Common myeloid progenitor, CD34-positive (primary cell): ENCODE measurements at regions of chr11 and their contacts with region 1.

Region 1: GRCh38 chr11:118610804-118611795 is 3.7 kb downstream of the PHLDB1 start:
- DNase-seq: peak; percentile 54 to 71 (median 70)
- H3K4me3 ChIP-seq: peak overlapping the region; percentile 4 to 64 (median 47)
- H3K27ac ChIP-seq: no peak overlapping the region
- H3K4me1 ChIP-seq: peaks cover 0 to 46% (median 38%) of the 10 kb centered on the region in 4 experiments
- H3K27me3 ChIP-seq: peaks cover 0 to 44% (median 13%) of the 10 kb centered on the region in 5 experiments

Region 2: DNA sequence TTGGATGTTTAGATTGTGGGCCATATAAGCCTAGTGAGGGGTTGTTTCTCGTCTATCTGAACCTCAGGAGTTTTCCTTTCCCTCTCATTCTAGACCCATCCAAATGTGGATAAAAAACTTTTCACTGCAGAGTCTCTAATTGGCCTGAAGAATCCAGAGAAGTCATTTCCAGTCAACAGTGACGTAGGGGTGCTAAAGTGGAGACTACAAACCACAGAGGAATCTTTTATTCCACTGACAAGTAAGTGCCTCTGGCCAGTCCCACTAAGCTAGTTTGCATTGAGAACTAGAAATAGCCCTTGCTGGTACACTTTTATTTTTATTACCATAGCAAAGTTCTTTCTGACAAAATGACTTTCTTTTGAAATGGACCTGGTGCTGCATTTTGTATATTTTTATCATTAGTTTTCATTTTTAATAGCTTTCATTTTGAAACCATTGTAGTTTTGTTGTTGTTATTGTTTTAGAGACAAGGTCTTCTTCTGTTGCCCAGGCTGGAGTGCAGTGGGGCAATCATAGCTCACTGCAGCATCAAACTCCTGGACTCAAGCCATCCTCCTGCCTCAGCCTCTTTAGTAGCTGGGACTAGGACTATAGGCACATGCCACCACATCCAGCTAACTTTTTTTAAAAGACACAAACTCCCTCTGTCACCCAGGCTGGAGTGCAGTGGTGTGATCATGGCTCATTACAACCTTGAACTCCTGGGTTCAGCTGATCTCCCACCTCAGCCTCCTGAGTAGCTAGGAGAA is 18.3 kb before region 1 on chr11:
- CTCF ChIA-PET with region 1: interaction called, 133 read pairs
- POLR2A ChIA-PET with region 1: interaction called, 3 read pairs
- DNase-seq: no peak
- H3K4me3 ChIP-seq: no peak overlapping the region
- H3K27ac ChIP-seq: no peak overlapping the region
- H3K4me1 ChIP-seq: peaks cover 0 to 9% (median 6%) of the 10 kb centered on the region in 4 experiments
- H3K27me3 ChIP-seq: no peaks in the 10 kb centered on the region

Region 3: GRCh38 chr11:118621071-118621783 is 10.1 kb after region 1 on chr11:
- CTCF ChIA-PET with region 1: interaction called, 31 read pairs
- POLR2A ChIA-PET with region 1: interaction called, 3 read pairs
- DNase-seq: peak in 2 of 3 donors; percentile 44 to 55
- H3K4me3 ChIP-seq: peak overlapping the region; percentile 22 to 74 (median 43)
- H3K27ac ChIP-seq: no peak overlapping the region
- H3K4me1 ChIP-seq: peaks cover 0 to 26% (median 20%) of the 10 kb centered on the region in 4 experiments
- H3K27me3 ChIP-seq: no peaks in the 10 kb centered on the region

Region 4: GRCh38 chr11:118634431-118635236 is 23.5 kb after region 1 on chr11:
- CTCF ChIA-PET with region 1: interaction called, 12 read pairs
- POLR2A ChIA-PET with region 1: no interaction called
- DNase-seq: peak in 2 of 3 donors; percentile 22 to 34
- H3K4me3 ChIP-seq: peak overlapping the region in 1 of 7 experiments; percentile 58
- H3K27ac ChIP-seq: no peak overlapping the region
- H3K4me1 ChIP-seq: peaks cover 0 to 6% (median 0%) of the 10 kb centered on the region in 4 experiments
- H3K27me3 ChIP-seq: no peaks in the 10 kb centered on the region

Region 5: DNA sequence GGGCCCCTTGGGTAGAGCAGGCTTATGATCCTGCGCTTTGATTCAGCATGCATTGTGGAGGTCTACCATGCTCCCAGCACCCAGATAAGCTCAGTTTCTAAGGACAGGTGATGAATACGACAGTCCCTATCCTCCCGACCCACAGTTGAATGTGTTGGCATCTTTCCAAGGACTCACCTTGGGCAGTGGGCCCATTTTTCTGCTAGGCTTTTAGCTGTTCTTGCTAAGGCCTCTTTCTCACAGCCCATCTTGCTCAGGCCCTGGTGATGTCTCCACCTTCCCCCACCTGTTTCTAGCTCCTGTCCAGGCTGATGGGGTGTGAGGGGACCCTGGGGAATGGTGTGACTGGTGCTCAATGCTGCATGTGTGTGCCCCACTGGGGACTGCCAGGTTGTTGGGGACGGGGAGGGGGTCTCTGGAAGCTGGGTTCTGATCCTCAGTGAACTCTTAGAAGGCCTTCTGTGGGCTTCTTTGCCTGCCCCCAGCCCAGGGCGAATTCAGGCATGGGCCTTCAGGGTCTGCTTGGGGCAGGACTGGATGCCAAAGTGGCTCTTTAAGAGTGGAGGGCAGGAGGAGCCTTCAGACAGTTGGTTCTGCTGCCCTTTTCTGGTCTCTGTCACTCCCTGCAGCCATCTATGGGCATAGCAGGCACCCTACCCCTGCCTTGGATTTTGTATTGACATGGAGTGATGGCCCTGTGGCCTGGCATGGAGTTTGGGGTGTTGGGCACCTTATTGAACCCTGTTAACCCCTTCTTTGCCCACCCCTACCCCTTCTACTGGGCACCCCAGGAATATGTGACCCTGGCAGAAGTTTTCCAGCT is 29.4 kb after region 1 on chr11:
- CTCF ChIA-PET with region 1: interaction called, 12 read pairs
- POLR2A ChIA-PET with region 1: no interaction called
- DNase-seq: peak in 2 of 3 donors; percentile 20 to 22
- H3K4me3 ChIP-seq: no peak overlapping the region
- H3K27ac ChIP-seq: no peak overlapping the region
- H3K4me1 ChIP-seq: no peaks in the 10 kb centered on the region
- H3K27me3 ChIP-seq: no peaks in the 10 kb centered on the region

Region 6: DNA sequence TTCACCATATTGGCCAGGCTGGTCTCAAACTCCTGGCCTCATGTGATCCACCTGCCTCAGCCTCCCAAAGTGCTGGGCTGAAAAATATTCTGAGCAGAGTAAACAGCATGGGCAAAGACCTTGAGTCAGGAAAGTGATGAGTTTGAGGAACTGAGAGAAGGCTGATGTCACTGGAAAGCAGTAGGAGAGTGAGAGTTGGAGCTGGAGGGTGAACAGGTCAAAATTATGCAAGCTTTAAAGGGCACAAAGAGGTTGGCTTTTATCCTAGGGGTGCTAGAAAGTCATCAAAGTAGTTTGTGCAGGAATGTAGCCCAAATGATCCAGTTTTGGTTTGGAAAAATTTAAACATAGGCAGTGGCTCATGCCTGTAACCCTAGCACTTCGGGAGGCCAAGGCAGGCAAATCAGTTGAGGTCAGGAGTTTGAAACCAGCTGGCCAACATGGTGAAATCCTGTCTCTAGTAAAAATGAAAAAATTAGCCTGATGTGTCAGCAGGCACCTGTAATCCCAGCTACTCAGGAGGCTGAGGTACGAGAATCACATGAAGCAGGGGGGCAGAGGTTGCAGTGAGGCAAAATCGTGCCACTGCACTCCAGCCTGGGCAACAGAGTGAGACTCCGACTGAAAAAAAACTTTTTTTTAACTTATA is 227.9 kb after region 1 on chr11:
- CTCF ChIA-PET with region 1: no interaction called
- POLR2A ChIA-PET with region 1: no interaction called
- DNase-seq: no peak
- H3K4me3 ChIP-seq: no peak overlapping the region
- H3K27ac ChIP-seq: no peak overlapping the region
- H3K4me1 ChIP-seq: no peaks in the 10 kb centered on the region
- H3K27me3 ChIP-seq: no peaks in the 10 kb centered on the region